B cell (primary cell): ENCODE measurements at regions of chr15 and their contacts with region 1.

Region 1: GRCh38 chr15:29534378-29534777 is 264.8 kb upstream of the NSMCE3 start:
- DNase-seq: no peak
- ATAC-seq: no peak
- H3K4me3 ChIP-seq: no peak overlapping the region
- H3K4me3 Mint-ChIP-seq: no peak overlapping the region
- H3K27ac ChIP-seq: no peak overlapping the region
- H3K27ac Mint-ChIP-seq: no peak overlapping the region
- H3K4me1 ChIP-seq: no peaks in the 10 kb centered on the region
- H3K4me1 Mint-ChIP-seq: no peaks in the 10 kb centered on the region
- H3K27me3 ChIP-seq: no peaks in the 10 kb centered on the region
- H3K27me3 Mint-ChIP-seq: no peaks in the 10 kb centered on the region
- CTCF ChIP-seq: no peak

Region 2: DNA sequence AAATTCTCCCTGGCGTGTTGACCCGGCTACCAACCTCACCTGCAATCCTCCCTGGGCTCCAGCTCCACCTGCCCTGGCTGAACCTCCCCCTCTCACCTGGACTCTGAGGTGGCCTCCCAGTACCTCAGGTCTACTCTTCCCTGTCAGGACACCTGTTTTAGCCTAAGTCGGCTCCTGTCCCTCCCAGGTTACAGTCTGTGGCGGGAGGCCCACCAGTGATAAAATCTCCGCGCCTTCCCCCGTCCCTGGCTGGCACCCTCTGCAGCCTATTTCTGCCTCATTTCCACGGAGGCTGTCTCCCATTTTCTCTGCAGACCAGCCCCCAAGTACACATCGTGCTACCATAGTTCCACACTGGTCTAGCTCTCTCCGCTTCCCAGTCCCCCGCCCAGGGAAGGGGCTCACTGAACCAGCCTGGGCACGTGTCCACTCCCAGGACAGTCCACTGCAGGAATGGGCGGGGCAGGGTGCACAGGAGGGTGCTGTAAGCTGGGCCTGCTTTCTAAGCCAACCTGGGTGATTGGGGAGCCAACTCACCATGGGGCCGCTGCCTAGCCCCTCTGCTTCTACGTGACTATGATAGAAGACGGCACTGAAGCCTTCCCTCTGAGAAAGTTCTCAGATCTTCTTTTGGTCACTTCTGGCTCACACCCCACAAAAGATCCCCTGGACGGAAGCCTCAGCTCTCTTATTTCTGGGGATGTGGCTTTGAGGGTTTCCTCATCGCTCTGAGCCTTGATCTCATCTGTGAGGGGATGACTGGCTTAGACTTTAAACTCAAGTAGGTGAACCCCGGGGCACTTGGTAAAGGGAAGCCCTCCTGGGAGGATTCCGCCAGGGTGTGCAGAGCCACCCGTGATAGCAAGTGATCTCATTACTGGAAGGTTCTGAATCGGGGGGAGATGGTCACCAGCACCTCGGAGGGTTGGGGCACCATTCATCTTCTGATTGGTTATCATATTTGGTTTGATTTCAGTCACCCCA is 361.3 kb before region 1 on chr15:
- CTCF ChIA-PET with region 1: no interaction called
- POLR2A ChIA-PET with region 1: interaction called, 21 read pairs
- intact Hi-C with region 1: no loop called
- DNase-seq: no peak
- ATAC-seq: no peak
- H3K4me3 ChIP-seq: no peak overlapping the region
- H3K4me3 Mint-ChIP-seq: no peak overlapping the region
- H3K27ac ChIP-seq: no peak overlapping the region
- H3K27ac Mint-ChIP-seq: no peak overlapping the region
- H3K4me1 ChIP-seq: no peaks in the 10 kb centered on the region
- H3K4me1 Mint-ChIP-seq: no peaks in the 10 kb centered on the region
- H3K27me3 ChIP-seq: no peaks in the 10 kb centered on the region
- H3K27me3 Mint-ChIP-seq: peaks cover 5% of the 10 kb centered on the region
- CTCF ChIP-seq: no peak

Region 3: DNA sequence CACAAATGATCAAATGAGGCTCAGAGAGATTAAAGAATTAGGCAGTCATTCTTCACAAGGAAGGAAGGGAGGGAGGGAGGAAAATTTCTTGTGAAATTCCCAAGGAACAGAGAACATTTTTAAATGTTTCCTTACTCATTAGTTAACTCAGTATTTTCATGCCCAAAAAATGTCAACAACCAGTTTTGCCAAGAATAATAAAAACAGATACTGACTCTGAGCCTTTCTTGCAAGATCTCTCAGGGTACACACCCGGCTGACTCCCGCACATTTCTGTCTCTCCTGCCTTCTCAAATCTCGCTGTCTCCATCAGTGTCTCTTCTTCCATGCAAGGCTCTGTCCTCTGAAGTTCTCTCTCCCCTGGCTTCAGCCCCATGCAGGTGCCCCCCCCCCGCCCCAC is 22.0 kb after region 1 on chr15:
- CTCF ChIA-PET with region 1: no interaction called
- POLR2A ChIA-PET with region 1: no interaction called
- intact Hi-C with region 1: no loop called
- DNase-seq: no peak
- ATAC-seq: no peak
- H3K4me3 ChIP-seq: no peak overlapping the region
- H3K4me3 Mint-ChIP-seq: no peak overlapping the region
- H3K27ac ChIP-seq: no peak overlapping the region
- H3K27ac Mint-ChIP-seq: no peak overlapping the region
- H3K4me1 ChIP-seq: no peaks in the 10 kb centered on the region
- H3K4me1 Mint-ChIP-seq: no peaks in the 10 kb centered on the region
- H3K27me3 ChIP-seq: peaks cover 0 to 2% (median 0%) of the 10 kb centered on the region in 4 experiments
- H3K27me3 Mint-ChIP-seq: peaks cover 13% of the 10 kb centered on the region
- CTCF ChIP-seq: no peak

Region 4: DNA sequence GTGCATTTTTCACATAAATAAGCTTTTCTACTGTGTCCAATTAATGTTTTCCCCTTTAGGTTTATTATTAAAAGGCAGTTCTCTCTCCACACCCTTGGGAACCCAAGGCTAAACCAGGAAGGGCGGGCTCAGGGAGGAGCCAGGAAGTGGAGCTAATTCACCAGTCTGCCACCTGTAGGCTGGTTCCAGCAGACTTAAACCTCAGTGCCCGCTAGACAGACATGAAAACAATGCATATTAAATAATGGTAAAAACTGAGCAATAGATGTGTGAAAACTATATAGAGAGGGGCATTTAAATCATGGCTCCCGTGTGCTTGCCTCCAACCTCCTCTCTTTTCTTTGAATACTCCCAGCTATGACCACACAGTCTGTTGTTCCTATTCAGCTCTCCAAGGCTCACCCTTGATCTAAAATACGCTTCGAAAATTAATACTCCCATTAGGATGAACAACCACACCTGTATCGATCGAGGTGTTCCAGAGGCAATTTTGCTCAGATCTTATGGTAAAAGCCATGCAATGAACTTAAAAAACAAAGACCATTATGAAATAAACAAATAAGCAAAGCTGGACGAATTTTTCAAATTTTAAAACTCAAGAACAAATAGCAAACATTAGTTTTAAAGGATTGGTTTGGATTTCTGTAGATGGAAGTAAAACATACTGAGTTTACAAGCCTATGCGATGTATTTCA is 34.6 kb after region 1 on chr15:
- CTCF ChIA-PET with region 1: no interaction called
- POLR2A ChIA-PET with region 1: no interaction called
- intact Hi-C with region 1: no loop called
- DNase-seq: no peak
- ATAC-seq: no peak
- H3K4me3 ChIP-seq: no peak overlapping the region
- H3K4me3 Mint-ChIP-seq: no peak overlapping the region
- H3K27ac ChIP-seq: no peak overlapping the region
- H3K27ac Mint-ChIP-seq: no peak overlapping the region
- H3K4me1 ChIP-seq: no peaks in the 10 kb centered on the region
- H3K4me1 Mint-ChIP-seq: peaks cover 7% of the 10 kb centered on the region
- H3K27me3 ChIP-seq: peaks cover 0 to 29% (median 22%) of the 10 kb centered on the region in 4 experiments
- H3K27me3 Mint-ChIP-seq: peaks cover 62% of the 10 kb centered on the region
- CTCF ChIP-seq: no peak

Region 5: DNA sequence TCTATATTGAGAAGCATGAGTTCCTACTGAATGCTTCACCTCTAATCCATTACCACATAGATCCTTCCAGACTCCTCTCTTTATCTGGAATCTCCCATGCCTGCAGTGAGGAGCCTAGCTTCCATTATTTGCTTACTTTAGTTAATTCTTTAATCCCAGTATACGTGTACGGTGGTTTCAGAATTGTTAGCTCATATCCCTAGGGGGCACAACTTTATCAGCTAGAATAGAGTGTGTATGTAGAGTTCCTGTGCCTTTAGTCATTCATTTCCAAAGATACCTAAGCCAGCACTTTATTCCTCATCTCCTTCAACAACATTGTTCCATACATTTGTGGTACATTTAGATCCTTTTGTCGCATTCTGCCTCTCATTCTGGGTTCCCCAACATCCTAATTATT is 61.9 kb after region 1 on chr15:
- CTCF ChIA-PET with region 1: no interaction called
- POLR2A ChIA-PET with region 1: no interaction called
- intact Hi-C with region 1: no loop called
- DNase-seq: no peak
- ATAC-seq: no peak
- H3K4me3 ChIP-seq: no peak overlapping the region
- H3K4me3 Mint-ChIP-seq: no peak overlapping the region
- H3K27ac ChIP-seq: no peak overlapping the region
- H3K27ac Mint-ChIP-seq: no peak overlapping the region
- H3K4me1 ChIP-seq: no peaks in the 10 kb centered on the region
- H3K4me1 Mint-ChIP-seq: no peaks in the 10 kb centered on the region
- H3K27me3 ChIP-seq: no peaks in the 10 kb centered on the region
- H3K27me3 Mint-ChIP-seq: no peaks in the 10 kb centered on the region
- CTCF ChIP-seq: no peak